Prostate gland (tissue), 2 donors: ENCODE measurements at regions of chr1 and their contacts with region 1.

Region 1: DNA sequence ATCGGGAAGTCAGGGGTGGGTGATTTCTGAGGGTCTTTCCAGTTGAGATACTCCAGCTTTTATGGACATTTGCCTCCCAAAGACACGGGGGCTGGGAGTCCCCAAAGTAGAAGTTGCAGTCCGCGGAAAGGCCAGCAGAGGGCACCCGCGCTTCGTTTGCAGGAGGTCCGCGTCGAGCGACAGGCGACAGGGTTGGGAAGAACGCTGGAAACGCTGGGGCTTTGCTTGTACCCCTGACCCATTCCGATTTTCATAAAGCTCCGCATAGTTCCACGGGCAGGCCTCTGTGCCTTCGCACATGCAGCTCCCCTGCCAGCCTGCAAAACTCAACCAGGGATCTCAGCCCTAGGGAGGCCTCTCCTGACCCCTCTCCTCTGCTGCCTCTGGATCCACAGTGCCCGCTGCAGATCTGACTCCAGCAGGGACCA is 44.2 kb upstream of the LAPTM5 start:
- DNase-seq: peak; percentile 73
- H3K4me3 ChIP-seq: no peak overlapping the region
- H3K27ac ChIP-seq: no peak overlapping the region
- H3K4me1 ChIP-seq: no peaks in the 10 kb centered on the region
- H3K27me3 ChIP-seq: no peaks in the 10 kb centered on the region
- CTCF ChIP-seq: peak; percentile 90 to 95 (median 94)
- POLR2A ChIP-seq: no peak

Region 2: DNA sequence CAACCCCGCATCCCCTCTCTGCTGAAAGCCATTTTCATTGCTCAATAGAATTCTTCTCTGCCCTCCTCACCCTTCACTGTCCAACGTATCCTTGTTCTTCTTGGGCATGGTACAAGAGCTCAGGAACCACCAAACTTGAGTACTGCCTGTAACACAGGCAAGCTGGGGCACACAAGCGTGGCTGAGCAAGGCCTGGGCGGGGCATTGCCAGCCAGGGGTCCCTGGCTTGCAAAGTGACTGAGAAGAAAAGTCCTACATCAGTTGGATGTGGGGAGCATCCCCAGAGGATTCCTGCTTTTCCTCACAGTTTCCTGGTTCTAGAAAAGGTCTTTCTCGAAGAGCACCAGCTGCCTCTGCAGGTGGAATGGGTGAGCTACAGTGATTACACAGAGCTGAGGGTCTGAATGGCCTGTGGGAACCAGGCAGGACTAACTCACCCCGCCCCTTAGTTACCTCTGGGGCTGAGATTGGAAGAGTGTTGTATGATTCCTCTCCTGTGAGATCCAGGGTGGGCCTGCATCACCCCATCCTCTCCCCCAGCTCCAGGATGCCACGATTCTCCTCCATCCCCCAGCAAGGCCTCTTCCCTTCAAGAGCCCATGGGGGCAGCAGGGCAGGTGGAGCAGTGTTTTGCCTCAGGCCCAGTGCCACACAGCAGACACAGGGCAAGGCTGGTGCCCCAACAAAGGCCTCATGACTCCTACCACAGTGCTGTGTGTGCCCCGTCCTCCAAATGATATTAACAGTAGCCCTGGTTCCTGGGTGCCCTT is 200.3 kb before region 1 on chr1:
- intact Hi-C with region 1: no loop called
- DNase-seq: no peak
- H3K4me3 ChIP-seq: no peak overlapping the region
- H3K27ac ChIP-seq: no peak overlapping the region
- H3K4me1 ChIP-seq: no peaks in the 10 kb centered on the region
- H3K27me3 ChIP-seq: no peaks in the 10 kb centered on the region
- CTCF ChIP-seq: no peak
- POLR2A ChIP-seq: no peak

Region 3: DNA sequence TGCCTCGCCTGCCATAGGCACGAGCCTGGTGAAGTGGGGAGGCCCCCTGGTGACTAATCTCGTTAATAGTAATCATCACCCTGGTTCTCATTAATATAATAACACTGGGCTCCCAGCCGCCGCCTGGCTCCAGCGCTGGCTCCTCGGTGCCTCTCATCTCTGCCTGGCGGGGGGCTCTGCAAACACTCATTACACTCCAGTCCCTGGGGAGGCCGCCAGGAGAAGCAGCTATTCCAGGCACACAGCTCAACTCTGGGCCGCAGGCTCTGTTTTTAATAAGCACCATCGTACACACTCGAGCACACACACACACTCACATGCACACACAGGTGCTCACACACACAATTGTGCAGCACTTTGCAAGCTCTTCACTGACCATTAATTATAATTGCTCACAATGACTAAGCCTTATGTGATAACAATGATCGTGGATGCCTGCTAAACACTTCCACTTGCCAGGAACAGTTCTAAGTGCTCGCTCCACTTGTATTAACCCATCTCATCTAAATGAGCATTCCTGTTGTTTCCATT is 54.5 kb after region 1 on chr1:
- intact Hi-C with region 1: loop called (anchors 5 kb)
- DNase-seq: no peak
- H3K4me3 ChIP-seq: no peak overlapping the region
- H3K27ac ChIP-seq: no peak overlapping the region
- H3K4me1 ChIP-seq: no peaks in the 10 kb centered on the region
- H3K27me3 ChIP-seq: no peaks in the 10 kb centered on the region
- CTCF ChIP-seq: no peak
- POLR2A ChIP-seq: no peak